Left colon (tissue), 2 donors: ENCODE measurements at regions of chr2 and their contacts with region 1.

Region 1: DNA sequence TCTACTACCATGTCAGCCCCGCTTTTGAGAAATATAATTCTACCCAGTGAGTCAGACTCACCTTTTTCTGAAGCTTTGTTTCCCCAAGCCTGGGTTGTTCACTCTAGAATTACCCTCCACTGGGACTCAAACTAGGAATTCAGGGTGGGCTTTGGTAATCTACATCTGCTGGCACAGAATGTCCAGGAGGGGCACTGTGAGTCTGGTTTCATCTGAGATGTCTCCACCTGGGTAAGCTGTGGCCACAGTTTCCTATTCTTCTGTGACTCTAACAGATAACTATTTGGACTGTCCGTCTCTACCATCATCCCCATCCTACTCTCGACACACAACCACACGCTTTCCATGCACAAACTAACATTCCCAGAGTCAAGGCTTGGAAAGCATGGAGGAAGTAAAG is 457.2 kb downstream of the STK39 start:
- DNase-seq: no peak
- ATAC-seq: no peak

Region 2: DNA sequence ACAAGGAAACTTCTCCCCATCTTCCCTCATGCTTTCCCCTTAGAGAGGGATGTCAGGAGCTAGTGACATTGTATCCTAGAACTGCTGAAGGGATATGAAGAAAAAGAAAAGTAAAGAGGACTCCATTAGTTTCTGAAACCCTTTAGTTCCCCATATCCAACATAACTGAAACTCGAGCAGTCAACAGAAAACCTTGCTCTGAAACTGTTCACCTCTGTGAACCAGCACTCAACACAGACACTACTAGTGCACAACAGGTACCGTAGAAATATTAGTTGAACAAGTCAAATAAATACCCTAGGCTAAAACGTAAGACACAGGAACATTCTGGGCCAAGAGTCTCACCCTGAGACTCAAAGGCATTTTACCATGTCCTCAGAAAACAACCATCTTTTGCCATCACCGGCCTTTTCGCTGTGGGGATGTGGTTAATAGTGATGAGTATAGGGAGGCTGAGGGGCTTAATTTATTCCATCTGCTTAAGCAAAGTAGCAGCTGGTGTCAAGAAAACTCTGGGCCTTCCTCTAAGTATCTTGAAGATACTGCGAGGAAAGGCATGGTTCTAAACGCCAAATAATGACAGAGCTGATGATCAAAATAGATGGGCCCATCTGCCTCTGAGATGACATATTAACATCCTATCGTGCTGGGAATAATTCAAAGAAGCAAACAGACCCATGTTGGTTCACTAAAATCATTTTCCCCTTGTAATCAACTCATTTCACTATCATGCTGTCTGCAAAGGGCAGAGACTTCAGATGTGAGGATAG is 300.4 kb after region 1 on chr2:
- intact Hi-C with region 1: loop called in 1 of 2 experiments (anchors 10 kb)
- DNase-seq: no peak
- ATAC-seq: no peak